ENCODE measurements at regions of chr1 and their contacts with region 1.

Region 1: GRCh38 chr1:9910425-9911178 is 533 bp upstream of the CTNNBIP1 start:
- DNase-seq: peak; percentile 99
- ATAC-seq: peak; percentile 89
- H3K4me3 ChIP-seq: peak overlapping the region; percentile 65 to 96 (median 91)
- H3K4me3 Mint-ChIP-seq: peak overlapping the region; percentile 99
- H3K27ac ChIP-seq: peak overlapping the region; percentile 56 to 67
- H3K27ac Mint-ChIP-seq: peak overlapping the region; percentile 99
- H3K4me1 ChIP-seq: peaks cover 10 to 18% of the 10 kb centered on the region in 2 donors
- H3K4me1 Mint-ChIP-seq: peaks cover 30% of the 10 kb centered on the region
- H3K27me3 ChIP-seq: no peaks in the 10 kb centered on the region
- H3K27me3 Mint-ChIP-seq: no peaks in the 10 kb centered on the region
- CTCF ChIP-seq: no peak

Region 2: DNA sequence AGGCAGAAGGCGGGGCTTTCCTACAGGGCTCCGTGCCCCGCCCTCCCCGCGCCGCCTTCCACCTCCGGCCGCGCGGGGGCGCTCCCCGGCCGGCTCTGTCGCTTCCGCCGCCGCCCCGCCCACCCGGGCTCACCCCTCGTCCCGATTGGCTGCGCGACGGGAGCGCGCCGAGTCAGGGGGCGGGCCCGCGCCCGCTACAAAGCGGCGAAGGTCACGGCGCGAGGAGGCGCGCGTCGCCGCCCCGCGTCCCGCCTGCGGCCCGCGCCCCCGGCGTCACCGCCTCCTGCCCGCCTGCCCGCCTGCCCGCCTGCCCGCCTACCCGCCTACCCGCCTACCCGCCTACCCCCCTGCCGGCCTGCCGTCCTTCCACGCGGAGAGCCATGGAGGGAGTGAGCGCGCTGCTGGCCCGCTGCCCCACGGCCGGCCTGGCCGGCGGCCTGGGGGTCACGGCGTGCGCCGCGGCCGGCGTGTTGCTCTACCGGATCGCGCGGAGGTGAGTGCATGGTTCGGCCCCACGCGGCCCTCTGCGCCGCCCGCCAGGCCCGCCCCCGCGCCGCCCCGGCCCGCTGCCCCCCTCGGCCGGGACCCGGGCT is 322.0 kb before region 1 on chr1 and contains the start of gene TMEM201:
- CTCF ChIA-PET with region 1: interaction called, 3 read pairs
- POLR2A ChIA-PET with region 1: no interaction called
- intact Hi-C with region 1: loop called (anchors 2 kb)
- DNase-seq: peak; percentile 96
- ATAC-seq: peak; percentile 91
- H3K4me3 ChIP-seq: peak within 1 kb of the TSS; percentile 33 to 62 (median 58)
- H3K4me3 Mint-ChIP-seq: peak within 1 kb of the TSS; percentile 91
- H3K27ac ChIP-seq: peak within 1 kb of the TSS in 1 of 2 donors; percentile 6
- H3K27ac Mint-ChIP-seq: peak within 1 kb of the TSS; percentile 82
- H3K4me1 ChIP-seq: peaks cover 33 to 42% of the 10 kb centered on the region in 2 donors
- H3K4me1 Mint-ChIP-seq: peaks cover 38% of the 10 kb centered on the region
- H3K27me3 ChIP-seq: no peaks in the 10 kb centered on the region
- H3K27me3 Mint-ChIP-seq: no peaks in the 10 kb centered on the region
- CTCF ChIP-seq: peak; percentile 80
- total RNA-seq, gene TMEM201: 9.1 and 11.2 TPM in 2 replicates

Region 3: GRCh38 chr1:9874959-9875635 is 35.5 kb before region 1 on chr1:
- CTCF ChIA-PET with region 1: interaction called, 6 read pairs
- POLR2A ChIA-PET with region 1: no interaction called
- intact Hi-C with region 1: loop called (anchors 2 kb)
- DNase-seq: peak; percentile 86
- ATAC-seq: peak; percentile 98
- H3K4me3 ChIP-seq: no peak overlapping the region
- H3K4me3 Mint-ChIP-seq: no peak overlapping the region
- H3K27ac ChIP-seq: no peak overlapping the region
- H3K27ac Mint-ChIP-seq: no peak overlapping the region
- H3K4me1 ChIP-seq: peaks cover 0 to 9% of the 10 kb centered on the region in 2 donors
- H3K4me1 Mint-ChIP-seq: peaks cover 4% of the 10 kb centered on the region
- H3K27me3 ChIP-seq: no peaks in the 10 kb centered on the region
- H3K27me3 Mint-ChIP-seq: no peaks in the 10 kb centered on the region
- CTCF ChIP-seq: peak; percentile 95

Region 4: GRCh38 chr1:9890224-9890731 is 20.3 kb before region 1 on chr1:
- CTCF ChIA-PET with region 1: no interaction called
- POLR2A ChIA-PET with region 1: no interaction called
- intact Hi-C with region 1: no loop called
- DNase-seq: no peak
- ATAC-seq: no peak
- H3K4me3 ChIP-seq: no peak overlapping the region
- H3K4me3 Mint-ChIP-seq: no peak overlapping the region
- H3K27ac ChIP-seq: peak overlapping the region in 1 of 2 donors; percentile 28
- H3K27ac Mint-ChIP-seq: no peak overlapping the region
- H3K4me1 ChIP-seq: peaks cover 18 to 22% of the 10 kb centered on the region in 2 donors
- H3K4me1 Mint-ChIP-seq: peaks cover 30% of the 10 kb centered on the region
- H3K27me3 ChIP-seq: no peaks in the 10 kb centered on the region
- H3K27me3 Mint-ChIP-seq: no peaks in the 10 kb centered on the region
- CTCF ChIP-seq: no peak

Region 5: DNA sequence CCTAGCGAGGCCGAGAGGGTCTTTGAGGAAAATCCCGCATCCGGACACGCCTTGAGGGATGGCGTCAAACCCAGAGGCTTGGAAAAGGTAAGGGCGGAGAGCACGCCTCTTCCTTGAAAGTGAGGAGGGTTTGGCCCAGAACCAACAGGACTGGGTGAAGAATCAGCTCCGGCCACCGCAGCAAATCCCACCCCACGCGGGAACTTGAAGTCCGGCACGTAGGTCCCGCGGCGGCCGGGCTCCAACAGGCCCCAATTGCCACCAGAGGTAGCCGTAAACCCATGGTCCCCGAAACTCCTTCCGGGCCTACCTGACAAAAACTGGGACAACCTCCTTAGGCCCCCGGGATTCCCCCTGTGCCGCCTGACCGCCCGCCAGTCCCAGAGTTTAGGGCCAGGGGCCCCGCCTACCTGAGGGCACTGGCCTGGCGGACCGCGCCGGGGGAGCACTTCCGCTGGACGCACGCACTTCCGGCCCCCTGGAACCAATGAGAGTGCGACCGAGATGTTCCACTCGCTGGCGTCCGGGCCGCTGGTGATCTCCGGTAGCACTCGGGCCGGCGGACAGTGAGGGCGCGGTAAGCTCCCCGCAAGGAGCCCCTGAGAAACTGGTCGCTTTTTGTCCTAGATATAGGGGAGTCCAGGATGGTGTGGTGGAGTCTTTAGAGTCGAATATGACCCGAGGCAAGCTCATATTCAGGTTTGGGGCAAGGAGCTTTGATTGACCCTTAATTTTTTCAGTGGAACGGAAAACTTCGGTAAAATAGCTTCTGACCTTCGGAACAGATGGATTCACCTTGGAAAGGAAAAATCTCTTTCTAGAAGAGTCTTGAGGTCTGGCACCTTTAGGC is 32.6 kb after region 1 on chr1 and contains the starts of genes LZIC and NMNAT1:
- CTCF ChIA-PET with region 1: interaction called, 3 read pairs
- POLR2A ChIA-PET with region 1: interaction called, 4 read pairs
- intact Hi-C with region 1: loop called (anchors 1 kb)
- DNase-seq: peak; percentile 96
- ATAC-seq: peak; percentile 95
- H3K4me3 ChIP-seq: peak within 1 kb of the TSS; percentile 67 to 98 (median 88)
- H3K4me3 Mint-ChIP-seq: peak within 1 kb of the TSS; percentile 95
- H3K27ac ChIP-seq: peak within 1 kb of the TSS; percentile 97
- H3K27ac Mint-ChIP-seq: peak within 1 kb of the TSS; percentile 97
- H3K4me1 ChIP-seq: peaks cover 14 to 27% of the 10 kb centered on the region in 2 donors
- H3K4me1 Mint-ChIP-seq: peaks cover 20% of the 10 kb centered on the region
- H3K27me3 ChIP-seq: no peaks in the 10 kb centered on the region
- H3K27me3 Mint-ChIP-seq: no peaks in the 10 kb centered on the region
- CTCF ChIP-seq: no peak
- total RNA-seq, gene LZIC: 21.5 and 26.0 TPM in 2 replicates
- total RNA-seq, gene NMNAT1: 8.0 and 8.9 TPM in 2 replicates

Region 6: DNA sequence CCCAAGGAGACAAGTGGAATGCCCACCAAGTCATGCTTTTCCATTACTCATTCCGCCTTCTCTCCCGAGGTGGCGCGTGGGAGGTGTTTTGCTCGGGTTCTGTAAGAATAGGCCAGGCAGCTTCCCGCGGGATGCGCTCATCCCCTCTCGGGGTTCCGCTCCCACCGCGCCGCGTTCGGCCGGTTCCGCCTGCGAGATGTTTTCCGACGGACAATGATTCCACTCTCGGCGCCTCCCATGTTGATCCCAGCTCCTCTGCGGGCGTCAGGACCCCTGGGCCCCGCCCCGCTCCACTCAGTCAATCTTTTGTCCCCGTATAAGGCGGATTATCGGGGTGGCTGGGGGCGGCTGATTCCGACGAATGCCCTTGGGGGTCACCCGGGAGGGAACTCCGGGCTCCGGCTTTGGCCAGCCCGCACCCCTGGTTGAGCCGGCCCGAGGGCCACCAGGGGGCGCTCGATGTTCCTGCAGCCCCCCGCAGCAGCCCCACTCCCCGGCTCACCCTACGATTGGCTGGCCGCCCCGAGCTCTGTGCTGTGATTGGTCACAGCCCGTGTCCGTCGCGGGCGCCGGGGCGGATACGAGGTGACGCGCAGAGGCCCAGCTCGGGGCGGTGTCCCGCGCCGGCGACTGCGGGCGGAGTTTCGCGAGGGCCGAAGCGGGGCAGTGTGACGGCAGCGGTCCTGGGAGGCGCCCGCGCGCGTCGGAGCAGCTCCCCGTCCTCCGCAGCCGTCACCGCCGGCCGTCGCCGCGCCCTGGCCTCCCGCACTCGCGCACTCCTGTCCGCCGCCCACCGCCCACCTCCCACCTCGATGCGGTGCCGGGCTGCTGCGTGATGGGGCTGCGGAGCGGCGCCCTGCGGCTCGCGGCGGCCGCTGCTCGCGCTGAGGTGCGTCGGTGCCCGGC is 299.6 kb after region 1 on chr1 and contains the start of gene KIF1B:
- CTCF ChIA-PET with region 1: interaction called, 3 read pairs
- POLR2A ChIA-PET with region 1: no interaction called
- intact Hi-C with region 1: loop called (anchors 1 kb)
- DNase-seq: peak; percentile 97
- ATAC-seq: peak; percentile 98
- H3K4me3 ChIP-seq: peak within 1 kb of the TSS; percentile 55 to 95 (median 77)
- H3K4me3 Mint-ChIP-seq: peak within 1 kb of the TSS; percentile 95
- H3K27ac ChIP-seq: peak within 1 kb of the TSS in 1 of 2 donors; percentile 33
- H3K27ac Mint-ChIP-seq: peak within 1 kb of the TSS; percentile 86
- H3K4me1 ChIP-seq: peaks cover 6 to 18% of the 10 kb centered on the region in 2 donors
- H3K4me1 Mint-ChIP-seq: peaks cover 24% of the 10 kb centered on the region
- H3K27me3 ChIP-seq: peaks cover 0 to 4% (median 0%) of the 10 kb centered on the region in 4 experiments
- H3K27me3 Mint-ChIP-seq: no peaks in the 10 kb centered on the region
- CTCF ChIP-seq: peak; percentile 99
- total RNA-seq, gene KIF1B: 16.4 and 17.1 TPM in 2 replicates

Region 7: GRCh38 chr1:10472220-10473144 is 561.9 kb after region 1 on chr1 and contains the start of gene DFFA:
- CTCF ChIA-PET with region 1: no interaction called
- POLR2A ChIA-PET with region 1: no interaction called
- intact Hi-C with region 1: loop called (anchors 2 kb)
- DNase-seq: peak; percentile 94
- ATAC-seq: peak; percentile 81
- H3K4me3 ChIP-seq: peak within 1 kb of the TSS; percentile 58 to 84 (median 80)
- H3K4me3 Mint-ChIP-seq: peak within 1 kb of the TSS; percentile 87
- H3K27ac ChIP-seq: peak within 1 kb of the TSS; percentile 38 to 74
- H3K27ac Mint-ChIP-seq: peak within 1 kb of the TSS; percentile 88
- H3K4me1 ChIP-seq: peaks cover 34 to 44% of the 10 kb centered on the region in 2 donors
- H3K4me1 Mint-ChIP-seq: peaks cover 46% of the 10 kb centered on the region
- H3K27me3 ChIP-seq: no peaks in the 10 kb centered on the region
- H3K27me3 Mint-ChIP-seq: no peaks in the 10 kb centered on the region
- CTCF ChIP-seq: no peak
- total RNA-seq, gene DFFA: 28.2 and 30.7 TPM in 2 replicates

Measured in B cell (primary cell).